ENCODE measurements at regions of chr12 and their contacts with region 1.

Region 1: DNA sequence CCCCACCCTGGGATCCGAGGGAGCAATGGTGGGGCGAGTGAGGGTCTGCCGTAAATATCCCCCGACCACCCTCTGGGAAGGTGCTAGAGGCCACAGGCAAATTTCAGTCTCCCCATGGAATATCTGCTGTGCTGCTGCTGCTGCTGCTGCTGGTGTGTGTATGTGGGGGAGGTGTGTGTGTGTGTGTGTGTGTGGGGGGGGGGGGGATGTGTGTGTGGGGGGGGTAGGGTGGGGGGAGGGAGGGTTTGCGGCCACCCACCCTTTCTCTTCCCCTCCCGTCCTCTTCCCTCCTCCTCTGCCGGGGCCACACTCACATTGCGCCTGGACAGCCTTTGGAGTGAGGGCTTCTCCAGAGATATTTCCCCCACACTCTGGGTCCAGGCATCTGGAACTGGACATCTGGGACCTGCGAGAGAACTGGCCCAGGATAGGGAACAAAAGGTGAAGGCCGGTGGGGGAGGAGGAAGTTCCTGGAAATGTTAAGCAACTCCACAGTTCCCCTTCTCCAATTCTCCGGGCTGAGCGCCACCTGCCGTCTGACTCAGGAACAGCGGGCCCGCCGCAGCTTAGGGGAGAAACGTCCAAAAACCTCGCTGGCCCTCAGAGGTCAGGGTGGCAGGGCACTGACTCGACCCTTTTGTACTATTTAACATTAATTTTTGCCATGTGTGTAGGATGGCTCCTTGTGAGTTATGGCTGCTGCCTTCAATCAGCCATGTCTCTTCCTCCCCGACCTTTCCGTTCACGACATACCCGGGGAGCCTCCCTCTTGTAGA is at the start of gene C1RL:
- DNase-seq: peak; percentile 83
- ATAC-seq: peak; percentile 50
- H3K4me3 ChIP-seq: peak within 1 kb of the TSS; percentile 74 to 94 (median 89)
- H3K4me3 Mint-ChIP-seq: peak within 1 kb of the TSS; percentile 97
- H3K27ac ChIP-seq: peak within 1 kb of the TSS; percentile 63 to 76
- H3K27ac Mint-ChIP-seq: peak within 1 kb of the TSS; percentile 98
- H3K4me1 ChIP-seq: peaks cover 12 to 18% of the 10 kb centered on the region in 2 donors
- H3K4me1 Mint-ChIP-seq: peaks cover 28% of the 10 kb centered on the region
- H3K27me3 ChIP-seq: no peaks in the 10 kb centered on the region
- H3K27me3 Mint-ChIP-seq: no peaks in the 10 kb centered on the region
- CTCF ChIP-seq: peak; percentile 92
- total RNA-seq, gene C1RL: 24.9 and 28.9 TPM in 2 replicates

Region 2: GRCh38 chr12:6867413-6868210 is 241.4 kb before region 1 on chr12 and contains the start of gene TPI1:
- CTCF ChIA-PET with region 1: interaction called, 35 read pairs
- POLR2A ChIA-PET with region 1: interaction called, 5 read pairs
- intact Hi-C with region 1: loop called (anchors 1 kb)
- DNase-seq: peak; percentile 83
- ATAC-seq: peak; percentile 83
- H3K4me3 ChIP-seq: peak within 1 kb of the TSS; percentile 56 to 88 (median 68)
- H3K4me3 Mint-ChIP-seq: peak within 1 kb of the TSS; percentile 96
- H3K27ac ChIP-seq: peak within 1 kb of the TSS; percentile 70 to 77
- H3K27ac Mint-ChIP-seq: peak within 1 kb of the TSS; percentile 97
- H3K4me1 ChIP-seq: peaks cover 33 to 41% of the 10 kb centered on the region in 2 donors
- H3K4me1 Mint-ChIP-seq: peaks cover 50% of the 10 kb centered on the region
- H3K27me3 ChIP-seq: no peaks in the 10 kb centered on the region
- H3K27me3 Mint-ChIP-seq: no peaks in the 10 kb centered on the region
- CTCF ChIP-seq: no peak
- total RNA-seq, gene TPI1: 178 and 181 TPM in 2 replicates

Region 3: DNA sequence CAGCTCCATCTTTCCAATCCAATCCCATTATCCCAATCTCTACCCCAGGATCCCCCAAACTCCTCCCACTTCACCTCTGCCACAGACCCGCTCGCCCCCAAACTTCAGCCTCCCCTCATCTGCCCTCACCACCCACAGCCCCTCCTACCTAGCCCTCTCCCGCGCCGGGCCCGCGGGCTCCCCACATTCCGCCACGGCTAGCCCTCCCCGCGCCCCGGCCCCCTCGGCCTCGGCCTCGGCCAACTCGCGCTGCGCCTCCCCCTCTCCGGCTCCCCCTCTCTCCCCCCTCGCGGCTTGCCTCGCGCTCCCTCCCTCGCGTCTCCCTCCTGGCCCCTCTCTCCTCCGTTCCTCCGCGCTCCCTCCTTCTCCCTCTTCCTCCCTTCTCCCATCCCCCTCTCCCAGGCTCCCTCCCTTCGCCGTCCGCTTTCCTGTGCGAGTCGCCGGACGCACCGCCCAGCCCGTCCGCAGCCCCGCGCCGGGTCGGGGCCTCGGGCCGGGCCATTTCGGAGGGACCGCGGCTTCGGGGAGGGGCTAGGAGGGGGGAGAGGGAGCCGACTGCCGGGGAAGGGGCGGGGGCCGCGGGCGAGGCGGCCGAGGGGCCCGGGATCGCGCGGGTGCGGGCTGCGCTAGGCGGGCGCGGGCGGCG is 181.5 kb before region 1 on chr12 and contains the start of gene ATN1:
- CTCF ChIA-PET with region 1: interaction called, 27 read pairs
- POLR2A ChIA-PET with region 1: no interaction called
- intact Hi-C with region 1: loop called (anchors 1 kb)
- DNase-seq: peak; percentile 71
- ATAC-seq: peak; percentile 44
- H3K4me3 ChIP-seq: peak within 1 kb of the TSS; percentile 15 to 86 (median 83)
- H3K4me3 Mint-ChIP-seq: peak within 1 kb of the TSS; percentile 88
- H3K27ac ChIP-seq: peak within 1 kb of the TSS; percentile 69 to 84
- H3K27ac Mint-ChIP-seq: peak within 1 kb of the TSS; percentile 97
- H3K4me1 ChIP-seq: peaks cover 36 to 51% of the 10 kb centered on the region in 2 donors
- H3K4me1 Mint-ChIP-seq: peaks cover 56% of the 10 kb centered on the region
- H3K27me3 ChIP-seq: no peaks in the 10 kb centered on the region
- H3K27me3 Mint-ChIP-seq: no peaks in the 10 kb centered on the region
- CTCF ChIP-seq: no peak
- total RNA-seq, gene ATN1: 49.5 and 50.8 TPM in 2 replicates

Region 4: DNA sequence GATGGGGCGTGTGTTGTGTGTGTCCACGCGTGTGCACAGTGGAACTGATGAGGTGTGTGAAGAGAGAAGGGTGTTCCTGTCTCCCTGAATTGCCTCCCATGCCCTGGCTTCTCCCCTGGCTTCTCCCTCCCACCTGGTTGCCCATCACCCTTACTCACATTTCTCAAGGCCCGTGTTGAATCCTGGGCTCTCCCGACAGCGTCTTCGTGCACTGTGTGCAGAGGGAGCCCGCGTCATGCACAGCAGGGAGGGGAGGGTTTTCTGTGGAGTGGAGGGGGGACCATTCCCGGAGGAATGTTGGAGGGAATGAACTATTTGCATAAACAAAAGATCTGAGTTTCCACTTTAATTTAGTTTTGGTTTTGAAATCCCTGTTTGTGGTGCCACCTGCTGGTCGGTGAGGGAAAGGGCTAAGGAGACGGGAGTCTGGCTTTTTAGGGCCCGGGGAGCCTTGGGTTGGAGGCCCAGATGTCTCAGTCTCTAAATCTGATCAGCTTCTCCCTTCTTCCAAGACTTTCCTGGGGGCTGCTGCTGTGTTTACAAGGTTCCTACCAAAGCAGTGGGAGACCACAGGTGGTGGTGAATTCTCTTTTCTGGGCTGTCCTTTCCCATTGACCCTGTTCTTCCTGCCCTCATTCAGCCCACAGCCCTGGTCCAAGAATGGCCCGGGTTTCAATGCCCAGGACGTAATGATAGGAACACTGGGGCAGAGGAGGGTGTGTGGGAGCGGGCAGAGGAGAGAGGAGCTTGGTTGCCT is 16.6 kb before region 1 on chr12 and contains the start of gene C1R:
- CTCF ChIA-PET with region 1: interaction called, 12 read pairs
- POLR2A ChIA-PET with region 1: no interaction called
- intact Hi-C with region 1: loop called (anchors 1 kb)
- DNase-seq: peak; percentile 74
- ATAC-seq: peak; percentile 78
- H3K4me3 ChIP-seq: peak within 1 kb of the TSS; percentile 15 to 61 (median 50)
- H3K4me3 Mint-ChIP-seq: peak within 1 kb of the TSS; percentile 90
- H3K27ac ChIP-seq: no peak within 1 kb of the TSS
- H3K27ac Mint-ChIP-seq: no peak within 1 kb of the TSS
- H3K4me1 ChIP-seq: peaks cover 0 to 12% of the 10 kb centered on the region in 2 donors
- H3K4me1 Mint-ChIP-seq: peaks cover 9% of the 10 kb centered on the region
- H3K27me3 ChIP-seq: peaks cover 0 to 3% (median 0%) of the 10 kb centered on the region in 4 experiments
- H3K27me3 Mint-ChIP-seq: peaks cover 4% of the 10 kb centered on the region
- CTCF ChIP-seq: peak; percentile 88
- total RNA-seq, gene C1R: 1.2 and 2.0 TPM in 2 replicates

Region 5: DNA sequence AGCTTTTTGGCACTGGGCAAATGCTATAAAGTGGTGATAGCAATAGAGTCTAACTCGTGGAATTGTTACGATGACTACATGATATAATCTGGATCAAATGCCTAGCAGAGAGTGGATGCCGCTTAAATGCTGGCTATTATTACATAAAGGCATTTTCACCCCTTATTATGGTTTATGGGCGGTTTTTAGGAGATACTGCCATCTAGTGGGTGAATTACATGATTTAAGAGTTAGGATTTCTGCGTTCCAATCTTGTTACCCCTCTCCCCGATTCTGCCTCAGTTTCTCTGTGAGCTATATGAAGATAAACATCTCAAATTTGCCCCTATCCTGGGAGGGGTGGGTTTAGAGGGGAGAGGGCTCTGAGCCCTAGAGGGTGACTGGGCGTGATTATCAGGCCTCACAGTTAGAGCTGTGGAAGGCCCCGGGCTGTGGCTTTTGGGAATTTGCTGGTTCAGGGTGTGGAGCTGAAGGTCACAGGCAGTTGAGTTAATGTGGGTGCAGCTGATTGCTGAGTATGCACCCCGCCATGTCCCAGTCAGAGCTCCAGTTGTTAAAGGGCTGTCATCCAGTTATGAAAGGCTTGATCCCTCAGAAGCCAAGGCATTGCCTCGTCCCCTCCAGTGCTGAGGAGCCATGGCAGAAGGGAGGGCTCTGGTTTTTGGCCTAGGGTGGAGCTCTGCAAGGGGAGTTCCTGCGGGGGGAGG is 35.6 kb after region 1 on chr12:
- CTCF ChIA-PET with region 1: interaction called, 12 read pairs
- POLR2A ChIA-PET with region 1: no interaction called
- intact Hi-C with region 1: no loop called
- DNase-seq: peak; percentile 56
- ATAC-seq: no peak
- H3K4me3 ChIP-seq: no peak overlapping the region
- H3K4me3 Mint-ChIP-seq: no peak overlapping the region
- H3K27ac ChIP-seq: no peak overlapping the region
- H3K27ac Mint-ChIP-seq: no peak overlapping the region
- H3K4me1 ChIP-seq: no peaks in the 10 kb centered on the region
- H3K4me1 Mint-ChIP-seq: peaks cover 2% of the 10 kb centered on the region
- H3K27me3 ChIP-seq: no peaks in the 10 kb centered on the region
- H3K27me3 Mint-ChIP-seq: no peaks in the 10 kb centered on the region
- CTCF ChIP-seq: peak; percentile 79

Measured in B cell (primary cell).